Activated CD4-positive, alpha-beta memory T cell treated with anti-CD3 and anti-CD28 coated beads for 36 hours (primary cell): ENCODE measurements at regions of chr4 and their contacts with region 1.

Region 1: GRCh38 chr4:56467284-56468096 is at the start of gene SRP72:
- DNase-seq: peak; percentile 92
- H3K4me3 Mint-ChIP-seq: peak within 1 kb of the TSS; percentile 98
- H3K27ac Mint-ChIP-seq: peak within 1 kb of the TSS; percentile 97
- H3K4me1 Mint-ChIP-seq: peaks cover 37% of the 10 kb centered on the region
- H3K27me3 Mint-ChIP-seq: no peaks in the 10 kb centered on the region
- total RNA-seq, gene SRP72: 183 to 184 TPM

Region 2: GRCh38 chr4:56387023-56388001 is 80.2 kb before region 1 on chr4 and contains the start of gene AASDH:
- CTCF ChIA-PET with region 1: no interaction called
- POLR2A ChIA-PET with region 1: interaction called, 12 read pairs
- intact Hi-C with region 1: loop called (anchors 1 kb)
- DNase-seq: peak; percentile 97
- H3K4me3 Mint-ChIP-seq: peak within 1 kb of the TSS; percentile 93
- H3K27ac Mint-ChIP-seq: peak within 1 kb of the TSS; percentile 99
- H3K4me1 Mint-ChIP-seq: peaks cover 30% of the 10 kb centered on the region
- H3K27me3 Mint-ChIP-seq: no peaks in the 10 kb centered on the region
- total RNA-seq, gene AASDH: 12.0 to 16.6 TPM

Region 3: DNA sequence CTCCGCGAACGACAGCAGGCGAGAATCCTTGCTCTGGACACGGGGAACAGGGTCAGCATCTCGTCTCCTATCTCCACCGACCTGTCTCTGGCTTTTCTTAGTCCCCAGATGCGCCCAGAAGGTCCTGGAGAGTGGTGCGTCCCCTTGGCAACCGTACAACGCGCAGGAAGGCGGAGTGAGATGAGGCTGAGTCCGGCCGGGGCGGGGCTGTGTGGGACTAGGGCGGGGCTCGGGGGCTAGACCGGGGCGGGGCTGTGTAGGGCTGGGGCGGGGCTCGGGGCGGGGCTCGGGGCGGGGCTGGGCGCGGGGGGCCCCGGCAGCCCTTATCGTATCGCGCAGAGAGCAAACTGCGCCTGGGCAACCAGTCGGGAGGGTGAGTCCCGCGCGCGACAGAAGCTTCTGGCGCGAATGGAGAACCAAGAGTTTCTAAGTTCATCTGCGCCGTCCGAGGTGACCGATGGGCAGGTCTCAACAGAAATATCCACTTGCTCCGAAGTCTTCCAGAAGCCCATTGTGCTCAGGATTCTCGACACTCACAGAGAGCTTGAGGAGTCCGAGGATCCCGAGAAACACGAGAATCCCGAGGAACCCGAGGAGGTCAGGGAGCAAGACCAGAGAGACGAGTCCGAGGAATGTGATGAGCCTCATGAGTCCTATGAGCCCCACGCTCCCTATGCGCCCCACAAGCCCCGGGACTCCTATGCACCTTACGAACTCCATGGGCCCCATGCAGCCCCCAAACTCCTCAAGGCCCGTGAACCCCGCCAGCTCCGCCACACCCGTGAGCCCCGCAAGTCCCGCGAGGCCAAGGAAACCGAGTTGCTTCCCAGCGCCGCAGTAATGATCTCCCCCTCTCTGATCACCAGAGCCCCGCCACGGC is 63.0 kb after region 1 on chr4:
- CTCF ChIA-PET with region 1: interaction called, 3 read pairs
- POLR2A ChIA-PET with region 1: interaction called, 3 read pairs
- intact Hi-C with region 1: loop called (anchors 1 kb)
- DNase-seq: peak; percentile 90
- H3K4me3 Mint-ChIP-seq: peak overlapping the region; percentile 58
- H3K27ac Mint-ChIP-seq: no peak overlapping the region
- H3K4me1 Mint-ChIP-seq: peaks cover 4% of the 10 kb centered on the region
- H3K27me3 Mint-ChIP-seq: peaks cover 10% of the 10 kb centered on the region

Region 4: DNA sequence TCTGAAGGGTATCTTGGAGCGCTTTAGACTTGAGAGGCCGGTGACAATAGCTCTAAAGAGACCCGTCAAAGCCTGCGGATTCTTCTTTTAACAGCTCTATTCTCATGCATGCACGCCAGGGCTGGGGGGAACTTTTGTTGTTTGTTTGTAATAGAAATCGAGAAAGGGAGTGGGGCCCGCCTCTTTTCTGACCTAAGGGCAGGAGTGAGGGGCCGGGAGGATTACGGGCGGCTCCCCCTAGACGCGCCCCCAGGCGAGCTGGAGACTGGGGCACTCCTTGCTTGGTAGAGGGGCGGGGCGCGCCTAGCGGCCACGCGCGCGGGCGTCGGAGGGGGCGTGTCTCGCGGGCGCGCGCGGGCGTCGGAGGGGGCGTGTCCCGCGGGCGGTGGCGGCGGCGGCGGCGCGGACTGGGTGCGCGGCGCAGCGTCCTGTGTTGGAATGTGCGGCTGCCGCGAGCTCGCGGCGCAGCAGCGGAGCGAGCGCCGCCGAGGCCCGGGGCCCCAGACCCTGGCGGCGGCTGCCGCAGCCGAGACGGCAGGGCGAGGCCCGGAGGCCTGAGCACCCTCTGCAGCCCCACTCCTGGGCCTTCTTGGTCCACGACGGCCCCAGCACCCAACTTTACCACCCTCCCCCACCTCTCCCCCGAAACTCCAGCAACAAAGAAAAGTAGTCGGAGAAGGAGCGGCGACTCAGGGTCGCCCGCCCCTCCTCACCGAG is 440.2 kb after region 1 on chr4 and contains the start of gene REST:
- CTCF ChIA-PET with region 1: no interaction called
- POLR2A ChIA-PET with region 1: no interaction called
- intact Hi-C with region 1: loop called (anchors 2 kb)
- DNase-seq: peak; percentile 80
- H3K4me3 Mint-ChIP-seq: peak within 1 kb of the TSS; percentile 88
- H3K27ac Mint-ChIP-seq: peak within 1 kb of the TSS; percentile 55
- H3K4me1 Mint-ChIP-seq: peaks cover 41% of the 10 kb centered on the region
- H3K27me3 Mint-ChIP-seq: no peaks in the 10 kb centered on the region
- total RNA-seq, gene REST: 46.1 to 47.0 TPM